MCF 10A (cell line): ENCODE measurements at regions of chr5 and their contacts with region 1.

Region 1: GRCh38 chr5:132334812-132335211 is 34.7 kb upstream of the SLC22A5 start:
- DNase-seq: peak; percentile 45
- H3K4me3 Mint-ChIP-seq: no peak overlapping the region
- H3K27ac Mint-ChIP-seq: peak overlapping the region; percentile 52
- H3K4me1 Mint-ChIP-seq: peaks cover 8% of the 10 kb centered on the region
- H3K27me3 Mint-ChIP-seq: no peaks in the 10 kb centered on the region
- CTCF ChIP-seq: no peak

Region 2: GRCh38 chr5:130795037-130795436 is 1539.8 kb before region 1 on chr5:
- CTCF ChIA-PET with region 1: no interaction called
- POLR2A ChIA-PET with region 1: no interaction called
- intact Hi-C with region 1: no loop called
- DNase-seq: peak; percentile 53
- H3K4me3 Mint-ChIP-seq: no peak overlapping the region
- H3K27ac Mint-ChIP-seq: peak overlapping the region; percentile 14
- H3K4me1 Mint-ChIP-seq: peaks cover 17% of the 10 kb centered on the region
- H3K27me3 Mint-ChIP-seq: no peaks in the 10 kb centered on the region
- CTCF ChIP-seq: no peak

Region 3: GRCh38 chr5:132322266-132322665 is 12.5 kb before region 1 on chr5:
- CTCF ChIA-PET with region 1: interaction called, 15 read pairs
- POLR2A ChIA-PET with region 1: interaction called, 16 read pairs
- intact Hi-C with region 1: no loop called
- DNase-seq: no peak
- H3K4me3 Mint-ChIP-seq: no peak overlapping the region
- H3K27ac Mint-ChIP-seq: no peak overlapping the region
- H3K4me1 Mint-ChIP-seq: no peaks in the 10 kb centered on the region
- H3K27me3 Mint-ChIP-seq: no peaks in the 10 kb centered on the region
- CTCF ChIP-seq: no peak

Region 4: DNA sequence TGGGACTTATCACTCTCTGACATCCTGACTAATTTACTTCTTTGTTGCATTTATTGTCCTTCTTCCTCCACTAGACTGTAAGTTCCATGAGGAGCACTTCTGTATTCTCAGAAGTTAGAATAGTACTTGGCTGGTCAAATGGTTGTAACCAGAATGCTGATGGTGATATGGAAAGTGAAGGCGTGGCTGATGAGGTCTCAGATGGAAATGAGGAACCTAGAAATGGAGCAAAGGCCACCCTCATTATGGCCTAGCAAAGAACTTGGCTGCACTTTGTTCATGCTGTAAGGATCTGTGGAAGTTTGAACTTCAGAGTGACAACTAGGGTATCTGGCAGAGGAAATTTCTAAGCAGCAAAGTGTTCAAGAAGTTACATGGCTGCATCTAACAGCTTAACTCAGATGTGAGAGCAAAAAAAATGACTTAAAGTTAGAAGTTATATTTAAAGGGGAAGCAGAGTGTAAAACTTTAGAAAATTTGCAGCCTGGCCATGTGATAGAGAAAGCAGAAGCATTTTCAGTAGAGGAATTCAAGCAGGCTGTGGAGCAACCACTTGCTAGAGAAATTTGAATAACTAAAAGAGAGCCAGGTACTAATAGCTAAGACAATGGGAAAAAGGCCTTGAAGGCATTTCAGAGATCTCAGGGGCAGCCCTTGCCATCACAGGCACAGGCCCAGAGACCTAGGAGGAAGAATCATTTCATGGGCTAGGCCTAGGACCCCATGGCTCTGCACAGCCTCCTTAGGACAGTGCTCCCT is 19.7 kb after region 1 on chr5:
- CTCF ChIA-PET with region 1: interaction called, 6 read pairs
- POLR2A ChIA-PET with region 1: interaction called, 12 read pairs
- intact Hi-C with region 1: no loop called
- DNase-seq: no peak
- H3K4me3 Mint-ChIP-seq: no peak overlapping the region
- H3K27ac Mint-ChIP-seq: peak overlapping the region; percentile 0
- H3K4me1 Mint-ChIP-seq: peaks cover 21% of the 10 kb centered on the region
- H3K27me3 Mint-ChIP-seq: no peaks in the 10 kb centered on the region
- CTCF ChIP-seq: no peak

Region 5: GRCh38 chr5:132369474-132370180 is 34.8 kb after region 1 on chr5 and contains the start of gene SLC22A5:
- CTCF ChIA-PET with region 1: interaction called, 3 read pairs
- POLR2A ChIA-PET with region 1: interaction called, 11 read pairs
- intact Hi-C with region 1: no loop called
- DNase-seq: peak; percentile 84
- H3K4me3 Mint-ChIP-seq: peak within 1 kb of the TSS; percentile 79
- H3K27ac Mint-ChIP-seq: peak within 1 kb of the TSS; percentile 39
- H3K4me1 Mint-ChIP-seq: peaks cover 44% of the 10 kb centered on the region
- H3K27me3 Mint-ChIP-seq: no peaks in the 10 kb centered on the region
- CTCF ChIP-seq: no peak
- total RNA-seq, gene SLC22A5: 122 and 167 TPM in 2 replicates

Region 6: DNA sequence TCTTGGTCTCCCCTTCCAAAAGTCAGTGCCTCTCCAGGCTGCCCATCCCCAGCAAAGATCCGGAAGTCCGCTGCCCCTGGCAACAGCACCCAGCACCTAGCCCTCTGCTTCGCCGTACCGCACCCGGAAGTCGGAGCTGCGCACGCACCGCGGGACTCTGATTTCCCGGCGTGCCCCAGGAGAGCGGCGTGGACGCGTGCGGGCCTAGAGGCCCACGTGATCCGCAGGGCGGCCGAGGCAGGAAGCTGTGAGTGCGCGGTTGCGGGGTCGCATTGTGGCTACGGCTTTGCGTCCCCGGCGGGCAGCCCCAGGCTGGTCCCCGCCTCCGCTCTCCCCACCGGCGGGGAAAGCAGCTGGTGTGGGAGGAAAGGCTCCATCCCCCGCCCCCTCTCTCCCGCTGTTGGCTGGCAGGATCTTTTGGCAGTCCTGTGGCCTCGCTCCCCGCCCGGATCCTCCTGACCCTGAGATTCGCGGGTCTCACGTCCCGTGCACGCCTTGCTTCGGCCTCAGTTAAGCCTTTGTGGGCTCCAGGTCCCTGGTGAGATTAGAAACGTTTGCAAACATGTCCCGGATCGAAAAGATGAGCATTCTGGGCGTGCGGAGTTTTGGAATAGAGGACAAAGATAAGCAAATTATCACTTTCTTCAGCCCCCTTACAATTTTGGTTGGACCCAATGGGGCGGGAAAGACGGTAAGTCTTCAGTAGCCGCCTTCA is 222.1 kb after region 1 on chr5 and contains the start of gene RAD50:
- CTCF ChIA-PET with region 1: no interaction called
- POLR2A ChIA-PET with region 1: no interaction called
- intact Hi-C with region 1: no loop called
- DNase-seq: peak; percentile 97
- H3K4me3 Mint-ChIP-seq: peak within 1 kb of the TSS; percentile 97
- H3K27ac Mint-ChIP-seq: peak within 1 kb of the TSS; percentile 99
- H3K4me1 Mint-ChIP-seq: peaks cover 16% of the 10 kb centered on the region
- H3K27me3 Mint-ChIP-seq: no peaks in the 10 kb centered on the region
- CTCF ChIP-seq: no peak
- total RNA-seq, gene RAD50: 145 TPM in 2 replicates